ENCODE measurements at regions of chr18 and their contacts with region 1.

Region 1: GRCh38 chr18:54416436-54416835 is 58.7 kb downstream of the C18orf54 start:
- DNase-seq: no peak
- ATAC-seq: no peak
- H3K4me3 ChIP-seq: no peak overlapping the region
- H3K27ac ChIP-seq: no peak overlapping the region
- H3K4me1 ChIP-seq: no peaks in the 10 kb centered on the region
- H3K27me3 ChIP-seq: no peaks in the 10 kb centered on the region; a peak in 1 of 5 replicates
- CTCF ChIP-seq: no peak
- EP300 ChIP-seq: no peak
- POLR2A ChIP-seq: no peak
- RAD21 ChIP-seq: no peak

Region 2: GRCh38 chr18:54109131-54109683 is 307.2 kb before region 1 on chr18:
- CTCF ChIA-PET with region 1: no interaction called
- POLR2A ChIA-PET with region 1: no interaction called
- in situ Hi-C with region 1: no loop called
- intact Hi-C with region 1: no loop called
- DNase-seq: no peak
- ATAC-seq: no peak
- H3K4me3 ChIP-seq: no peak overlapping the region
- H3K27ac ChIP-seq: no peak overlapping the region
- H3K4me1 ChIP-seq: no peaks in the 10 kb centered on the region
- H3K27me3 ChIP-seq: no peaks in the 10 kb centered on the region; a peak in 1 of 5 replicates
- CTCF ChIP-seq: no peak
- EP300 ChIP-seq: no peak
- POLR2A ChIP-seq: no peak
- RAD21 ChIP-seq: no peak

Region 3: DNA sequence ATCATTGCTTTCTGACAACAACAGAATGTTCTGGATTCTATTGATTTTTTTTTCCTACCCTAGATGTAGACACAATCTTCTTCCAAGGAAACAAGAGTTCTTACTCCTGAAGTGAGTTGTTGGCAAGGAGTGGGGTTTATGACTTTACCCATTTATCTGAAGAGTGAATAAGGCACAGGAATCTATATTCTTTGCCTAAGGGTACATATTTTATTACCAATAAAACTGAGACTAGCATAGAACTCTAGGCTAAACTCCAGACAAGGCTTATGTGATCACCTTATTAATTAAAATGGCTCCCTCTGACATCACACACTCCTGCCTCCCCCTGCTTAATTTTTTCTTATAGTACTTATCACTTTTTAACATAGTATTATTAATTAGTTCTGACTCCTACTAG is 11.1 kb before region 1 on chr18:
- CTCF ChIA-PET with region 1: no interaction called
- POLR2A ChIA-PET with region 1: no interaction called
- in situ Hi-C with region 1: no loop called
- intact Hi-C with region 1: loop called (anchors 1 kb)
- DNase-seq: no peak
- ATAC-seq: no peak
- H3K4me3 ChIP-seq: no peak overlapping the region
- H3K27ac ChIP-seq: no peak overlapping the region
- H3K4me1 ChIP-seq: no peaks in the 10 kb centered on the region
- H3K27me3 ChIP-seq: no peaks in the 10 kb centered on the region
- CTCF ChIP-seq: no peak
- EP300 ChIP-seq: no peak
- POLR2A ChIP-seq: no peak
- RAD21 ChIP-seq: no peak

Region 4: GRCh38 chr18:54647176-54647575 is 230.7 kb after region 1 on chr18:
- CTCF ChIA-PET with region 1: no interaction called
- POLR2A ChIA-PET with region 1: no interaction called
- in situ Hi-C with region 1: no loop called
- intact Hi-C with region 1: no loop called
- DNase-seq: peak; percentile 37
- ATAC-seq: peak; percentile 71; the same call in 2 of the 3 replicates
- H3K4me3 ChIP-seq: no peak overlapping the region
- H3K27ac ChIP-seq: no peak overlapping the region
- H3K4me1 ChIP-seq: no peaks in the 10 kb centered on the region
- H3K27me3 ChIP-seq: no peaks in the 10 kb centered on the region; a peak in 1 of 5 replicates
- CTCF ChIP-seq: peak; percentile 50
- EP300 ChIP-seq: no peak
- POLR2A ChIP-seq: no peak
- RAD21 ChIP-seq: no peak